Endothelial cell of umbilical vein (primary cell): ENCODE measurements at regions of chr15 and their contacts with region 1.

Region 1: DNA sequence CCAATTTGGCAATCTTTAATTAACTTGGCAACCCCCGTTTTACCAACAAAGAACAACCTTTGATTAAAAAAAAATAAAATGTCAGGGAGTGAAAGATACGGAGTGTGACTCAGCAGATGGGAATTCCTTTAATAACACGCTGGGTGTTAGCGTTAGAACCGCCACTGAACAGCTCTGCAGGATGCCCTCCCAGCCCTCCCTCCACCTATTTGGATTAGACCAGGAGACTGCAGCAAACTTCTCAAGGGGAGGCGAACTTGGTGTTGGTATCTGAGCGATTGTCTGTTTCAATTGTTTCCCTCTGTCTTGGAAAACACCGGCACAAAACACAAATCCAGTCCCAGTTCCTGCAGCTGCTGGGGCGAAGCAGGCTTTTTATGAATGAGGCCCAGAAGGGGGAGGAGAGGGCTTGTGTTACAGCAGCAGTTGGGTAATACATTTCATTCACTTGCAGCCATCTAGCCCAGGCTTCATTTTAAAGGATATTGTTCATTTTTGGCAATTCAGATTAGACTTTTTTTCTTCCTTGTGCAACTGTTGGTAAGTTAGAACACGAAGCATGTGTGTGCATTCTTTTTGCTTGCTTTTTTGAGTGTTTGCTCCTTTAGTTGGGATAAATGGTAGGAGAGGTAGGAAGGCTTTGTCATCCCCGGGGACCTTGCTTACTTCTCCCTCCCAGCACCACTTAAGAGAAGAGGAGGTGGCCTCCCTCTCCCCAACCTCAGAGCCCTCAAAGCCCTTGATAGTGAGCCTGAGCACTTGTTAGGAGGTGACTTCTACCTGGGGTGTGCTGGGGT is 152.3 kb downstream of the IGF1R start:
- DNase-seq: peak; percentile 98
- H3K4me3 ChIP-seq: peak overlapping the region in 1 of 3 experiments; percentile 6
- H3K27ac ChIP-seq: peak overlapping the region; percentile 80
- H3K4me1 ChIP-seq: peaks cover 42% of the 10 kb centered on the region
- H3K27me3 ChIP-seq: no peaks in the 10 kb centered on the region
- CTCF ChIP-seq: peak in 1 of 2 donors; percentile 1
- POLR2A ChIP-seq: no peak

Region 2: DNA sequence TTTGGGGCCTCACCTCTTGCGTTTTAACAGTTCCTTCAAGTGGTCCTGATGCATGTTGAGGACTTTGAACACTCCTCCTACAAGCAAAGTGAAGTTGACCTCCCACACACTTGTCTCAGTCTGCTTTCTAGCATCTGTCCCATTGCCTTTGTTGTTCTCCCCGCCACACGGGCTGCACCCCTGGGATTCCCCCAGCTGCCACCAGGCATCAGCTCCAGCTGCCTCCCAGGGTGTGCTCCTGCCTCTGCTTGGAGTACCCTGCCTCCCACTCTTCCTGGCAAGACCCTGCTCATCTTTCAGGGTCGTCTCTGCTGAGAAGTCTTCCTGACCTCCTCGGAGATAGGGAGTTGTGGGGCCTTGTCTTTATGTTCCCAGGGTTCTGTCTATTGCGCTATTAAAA is 100.1 kb before region 1 on chr15:
- CTCF ChIA-PET with region 1: no interaction called
- POLR2A ChIA-PET with region 1: no interaction called
- dilution Hi-C with region 1: no loop called
- intact Hi-C with region 1: no loop called
- DNase-seq: no peak
- H3K4me3 ChIP-seq: no peak overlapping the region
- H3K27ac ChIP-seq: no peak overlapping the region
- H3K4me1 ChIP-seq: no peaks in the 10 kb centered on the region
- H3K27me3 ChIP-seq: no peaks in the 10 kb centered on the region
- CTCF ChIP-seq: no peak
- POLR2A ChIP-seq: no peak

Region 3: GRCh38 chr15:98727115-98728085 is 73.2 kb before region 1 on chr15:
- CTCF ChIA-PET with region 1: no interaction called
- POLR2A ChIA-PET with region 1: no interaction called
- dilution Hi-C with region 1: no loop called
- intact Hi-C with region 1: loop called (anchors 2 kb)
- DNase-seq: peak; percentile 92
- H3K4me3 ChIP-seq: no peak overlapping the region
- H3K27ac ChIP-seq: peak overlapping the region; percentile 98
- H3K4me1 ChIP-seq: peaks cover 35% of the 10 kb centered on the region
- H3K27me3 ChIP-seq: no peaks in the 10 kb centered on the region
- CTCF ChIP-seq: no peak
- POLR2A ChIP-seq: no peak

Region 4: DNA sequence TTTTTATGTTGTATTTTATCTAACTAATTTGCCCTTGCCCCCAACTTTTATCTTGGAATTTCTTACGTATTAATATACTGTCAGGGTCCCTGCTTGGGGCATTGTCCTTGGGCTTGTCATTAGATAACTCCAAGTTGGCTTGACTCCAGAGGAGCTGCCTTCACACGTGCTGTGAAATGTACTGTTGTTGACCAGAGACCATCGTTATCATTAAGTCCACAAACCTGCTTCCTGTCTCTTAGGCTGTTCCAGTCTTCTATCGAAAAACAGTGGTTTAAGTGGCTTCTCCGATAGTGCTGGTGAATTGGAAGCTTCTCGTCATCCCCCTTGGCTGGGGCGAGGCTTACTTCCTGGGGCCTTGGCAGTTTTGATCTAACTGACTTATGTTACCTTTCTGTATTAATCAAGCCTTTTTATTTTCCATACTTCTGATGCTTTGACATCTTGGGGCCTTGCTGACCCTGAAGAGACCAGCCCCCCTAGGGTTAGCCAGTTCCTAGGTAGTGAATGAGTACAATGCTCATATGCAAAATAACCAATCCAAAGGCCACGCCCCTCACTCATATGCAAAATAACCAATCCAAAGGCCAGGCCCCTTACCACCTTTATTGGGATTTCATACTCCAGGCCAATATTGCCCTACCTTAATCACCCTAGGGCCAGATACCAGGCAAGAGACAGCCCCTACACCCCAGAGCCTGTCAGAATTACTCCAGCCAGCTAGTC is 12.2 kb after region 1 on chr15:
- CTCF ChIA-PET with region 1: interaction called, 8 read pairs
- POLR2A ChIA-PET with region 1: no interaction called
- dilution Hi-C with region 1: no loop called
- intact Hi-C with region 1: loop called (anchors 1 kb)
- DNase-seq: peak; percentile 91
- H3K4me3 ChIP-seq: no peak overlapping the region
- H3K27ac ChIP-seq: peak overlapping the region; percentile 32
- H3K4me1 ChIP-seq: peaks cover 16% of the 10 kb centered on the region
- H3K27me3 ChIP-seq: no peaks in the 10 kb centered on the region
- CTCF ChIP-seq: no peak
- POLR2A ChIP-seq: peak; percentile 34

Region 5: DNA sequence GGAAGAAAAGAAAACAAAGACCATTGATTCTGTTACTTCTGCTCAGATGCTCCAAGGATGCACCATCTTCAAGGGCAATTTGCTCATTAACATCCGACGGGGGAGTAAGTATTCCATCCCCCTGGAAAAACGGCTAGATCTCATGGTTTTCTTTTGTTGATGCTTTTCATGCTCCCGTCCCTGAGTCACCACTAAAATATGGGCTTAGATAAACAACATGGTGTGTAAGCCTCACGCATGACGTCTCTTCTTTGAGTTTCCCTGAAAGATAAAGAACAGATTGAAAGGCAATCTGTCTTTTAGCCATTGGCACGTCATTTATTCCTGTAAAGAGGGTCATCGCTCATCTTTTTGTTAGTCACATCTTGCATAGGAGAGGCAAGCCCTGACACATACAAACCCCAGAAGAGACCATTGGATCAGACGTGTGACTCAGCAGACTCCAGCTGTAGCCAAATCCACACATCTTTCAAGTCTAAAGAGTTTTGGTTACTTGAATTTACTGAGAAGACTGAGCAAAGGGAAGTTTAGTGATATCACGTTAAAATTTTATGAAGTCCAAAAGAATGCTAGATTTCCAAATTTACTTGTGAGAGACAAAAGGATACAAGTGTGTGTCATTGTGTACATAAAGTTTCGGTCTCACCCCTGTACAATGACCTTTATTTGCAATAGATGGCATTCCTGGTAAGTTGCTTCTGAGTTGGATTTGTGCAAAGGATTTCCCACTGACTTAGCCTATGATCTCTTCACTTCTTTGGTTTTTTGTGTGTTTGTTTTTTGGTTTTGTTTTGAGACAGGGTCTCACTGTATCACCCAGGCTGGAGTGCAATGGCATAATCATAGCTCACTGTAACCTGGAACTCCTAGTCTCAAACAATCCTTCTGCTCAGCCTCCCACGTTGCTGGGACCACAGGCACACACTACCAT is 96.4 kb after region 1 on chr15:
- CTCF ChIA-PET with region 1: no interaction called
- POLR2A ChIA-PET with region 1: no interaction called
- dilution Hi-C with region 1: no loop called
- intact Hi-C with region 1: loop called (anchors 5 kb)
- DNase-seq: peak; percentile 95
- H3K4me3 ChIP-seq: peak overlapping the region in 1 of 3 experiments; percentile 1
- H3K27ac ChIP-seq: peak overlapping the region; percentile 99
- H3K4me1 ChIP-seq: peaks cover 32% of the 10 kb centered on the region
- H3K27me3 ChIP-seq: no peaks in the 10 kb centered on the region
- CTCF ChIP-seq: no peak
- POLR2A ChIP-seq: no peak